ENCODE measurements at regions of chr1 and their contacts with region 1.

Region 1: GRCh38 chr1:205775015-205775716 is at the start of gene RAB29:
- DNase-seq: peak; percentile 94
- ATAC-seq: peak; percentile 94
- H3K4me3 Mint-ChIP-seq: peak within 1 kb of the TSS; percentile 89
- H3K27ac Mint-ChIP-seq: peak within 1 kb of the TSS; percentile 93
- H3K4me1 Mint-ChIP-seq: peaks cover 46% of the 10 kb centered on the region
- H3K27me3 Mint-ChIP-seq: no peaks in the 10 kb centered on the region
- total RNA-seq, gene RAB29: 51.0 to 61.4 TPM

Region 2: DNA sequence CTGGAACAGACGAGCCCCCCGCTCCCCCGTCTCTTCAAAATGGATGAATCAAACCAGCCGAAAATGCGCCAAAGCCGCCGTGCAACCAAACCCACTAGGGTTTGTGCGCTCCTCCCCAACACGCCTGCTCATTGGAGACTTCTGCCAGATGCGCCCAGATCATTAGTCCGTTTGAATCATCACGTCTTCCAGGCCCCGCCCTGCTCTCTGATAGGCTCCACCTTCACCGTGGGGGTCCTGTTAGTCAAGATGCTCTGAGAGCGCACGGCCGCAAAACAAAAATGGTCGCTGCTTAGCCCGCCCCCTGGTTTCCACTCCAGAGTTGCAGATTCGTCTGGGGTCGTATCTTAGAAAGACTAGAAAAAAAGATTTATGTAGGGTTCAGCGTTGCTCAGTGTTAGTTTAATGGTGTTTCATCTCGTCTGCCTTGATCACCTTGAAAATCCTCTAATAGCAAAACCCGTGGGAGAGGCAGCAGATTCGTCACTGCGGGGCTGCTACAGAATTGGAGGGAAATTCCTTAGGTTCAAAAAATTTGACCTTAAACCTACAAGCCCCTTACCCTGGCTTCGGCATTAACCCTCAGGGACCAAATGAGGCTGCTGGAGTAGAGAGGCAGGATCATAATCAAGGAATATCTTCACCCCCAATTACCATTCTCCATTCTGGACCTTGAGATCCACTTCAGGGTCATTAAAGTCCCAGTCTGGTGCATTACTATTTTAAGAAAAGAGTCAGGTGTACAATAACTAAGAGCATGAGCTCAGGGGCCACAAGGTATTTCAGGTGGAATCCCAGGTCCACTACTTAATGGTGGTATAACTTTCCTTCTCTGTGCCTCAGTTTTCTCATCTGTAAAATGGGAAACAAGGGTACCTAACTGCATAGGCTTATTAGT is 24.8 kb before region 1 on chr1 and contains the start of gene NUCKS1:
- CTCF ChIA-PET with region 1: interaction called, 13 read pairs
- DNase-seq: peak; percentile 99
- ATAC-seq: peak; percentile 85
- H3K4me3 Mint-ChIP-seq: peak within 1 kb of the TSS; percentile 92
- H3K27ac Mint-ChIP-seq: peak within 1 kb of the TSS; percentile 95
- H3K4me1 Mint-ChIP-seq: peaks cover 38% of the 10 kb centered on the region
- H3K27me3 Mint-ChIP-seq: no peaks in the 10 kb centered on the region
- total RNA-seq, gene NUCKS1: 179 to 211 TPM

Measured in activated CD8-positive, alpha-beta memory T cell treated with anti-CD3 and anti-CD28 coated beads, Interleukin-2, amount 10 ng/mL, durations not matched to agents 7 days and 5 days (primary cell).